WTC11 (cell line): ENCODE measurements at regions of chr5 and their contacts with region 1.

Region 1: GRCh38 chr5:140868721-140869554 is at the start of gene PCDHA11:
- DNase-seq: no peak
- ATAC-seq: peak; percentile 93
- H3K4me3 Mint-ChIP-seq: peak within 1 kb of the TSS; percentile 88
- H3K27ac Mint-ChIP-seq: peak within 1 kb of the TSS; percentile 78
- H3K4me1 Mint-ChIP-seq: peaks cover 16% of the 10 kb centered on the region
- H3K27me3 Mint-ChIP-seq: no peaks in the 10 kb centered on the region
- CTCF ChIP-seq: no peak
- total RNA-seq, gene PCDHA11: 5.8 to 8.7 TPM (median 7.9 TPM) in 3 replicates

Region 2: DNA sequence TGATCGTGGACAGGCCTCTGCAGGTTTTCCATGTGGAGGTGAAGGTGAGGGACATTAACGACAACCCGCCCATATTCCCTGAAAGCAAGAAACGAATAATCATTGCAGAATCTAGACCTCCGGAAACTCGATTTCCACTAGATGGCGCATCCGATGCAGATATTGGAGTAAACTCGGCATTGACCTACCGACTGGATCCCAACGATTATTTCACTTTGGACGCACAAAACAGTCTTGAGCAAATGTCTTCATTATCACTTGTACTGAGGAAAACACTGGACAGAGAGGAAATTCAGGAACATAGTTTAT is 13.6 kb after region 1 on chr5:
- CTCF ChIA-PET with region 1: interaction called, 13 read pairs
- POLR2A ChIA-PET with region 1: no interaction called
- DNase-seq: peak; percentile 69
- ATAC-seq: peak; percentile 70
- H3K4me3 Mint-ChIP-seq: peak overlapping the region; percentile 83
- H3K27ac Mint-ChIP-seq: peak overlapping the region; percentile 58; the same call in 1 of the 2 replicates
- H3K4me1 Mint-ChIP-seq: peaks cover 16% of the 10 kb centered on the region; the same call in 1 of the 2 replicates
- H3K27me3 Mint-ChIP-seq: no peaks in the 10 kb centered on the region
- CTCF ChIP-seq: peak; percentile 21; the same call in 1 of the 2 replicates

Region 3: GRCh38 chr5:140977003-140977402 is 108.1 kb after region 1 on chr5:
- CTCF ChIA-PET with region 1: no interaction called
- POLR2A ChIA-PET with region 1: no interaction called
- DNase-seq: no peak
- ATAC-seq: no peak
- H3K4me3 Mint-ChIP-seq: no peak overlapping the region
- H3K27ac Mint-ChIP-seq: peak overlapping the region; percentile 15; the same call in 1 of the 2 replicates
- H3K4me1 Mint-ChIP-seq: peaks cover 33% of the 10 kb centered on the region
- H3K27me3 Mint-ChIP-seq: no peaks in the 10 kb centered on the region
- CTCF ChIP-seq: no peak

Region 4: GRCh38 chr5:141199359-141200235 is 330.7 kb after region 1 on chr5 and contains the start of gene PCDHB11:
- CTCF ChIA-PET with region 1: no interaction called
- POLR2A ChIA-PET with region 1: no interaction called
- DNase-seq: no peak
- ATAC-seq: peak; percentile 67
- H3K4me3 Mint-ChIP-seq: peak within 1 kb of the TSS; percentile 24
- H3K27ac Mint-ChIP-seq: no peak within 1 kb of the TSS
- H3K4me1 Mint-ChIP-seq: peaks cover 7% of the 10 kb centered on the region
- H3K27me3 Mint-ChIP-seq: no peaks in the 10 kb centered on the region; the same call in 1 of the 2 replicates
- CTCF ChIP-seq: peak; percentile 32; the same call in 1 of the 2 replicates
- total RNA-seq, gene PCDHB11: 0.61 to 1.2 TPM (median 0.92 TPM) in 3 replicates